ENCODE measurements at regions of chr11 and their contacts with region 1.

Region 1: GRCh38 chr11:75547580-75548058 is 14.4 kb upstream of the SERPINH1 start:
- H3K4me3 ChIP-seq: no peak overlapping the region
- H3K27ac ChIP-seq: no peak overlapping the region
- H3K4me1 ChIP-seq: no peaks in the 10 kb centered on the region
- CTCF ChIP-seq: peak; percentile 63

Region 2: DNA sequence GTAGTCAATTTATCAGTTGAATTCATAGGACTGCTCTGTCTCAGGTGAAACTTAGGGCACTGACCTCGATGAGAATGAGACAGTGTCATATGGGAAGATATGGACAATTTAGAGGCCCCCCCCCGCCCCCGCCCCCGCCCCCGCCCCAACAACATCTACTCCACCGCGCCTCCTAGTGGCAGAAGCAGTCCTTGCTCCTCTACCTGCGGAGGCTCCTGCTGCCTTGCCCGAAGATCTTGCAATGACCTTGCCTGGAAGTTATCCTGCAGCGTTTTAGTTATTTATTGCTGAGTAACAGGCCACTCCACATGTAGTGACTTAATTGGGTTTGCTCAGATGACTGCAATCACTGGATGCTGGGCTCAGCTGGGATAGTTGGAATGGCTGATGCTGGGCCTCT is 29.6 kb after region 1 on chr11:
- CTCF ChIA-PET with region 1: interaction called, 29 read pairs
- POLR2A ChIA-PET with region 1: interaction called, 4 read pairs
- H3K4me3 ChIP-seq: no peak overlapping the region
- H3K27ac ChIP-seq: no peak overlapping the region
- H3K4me1 ChIP-seq: no peaks in the 10 kb centered on the region
- CTCF ChIP-seq: no peak

Region 3: GRCh38 chr11:75768112-75768908 is 220.7 kb after region 1 on chr11 and contains the start of gene DGAT2:
- CTCF ChIA-PET with region 1: no interaction called
- POLR2A ChIA-PET with region 1: no interaction called
- H3K4me3 ChIP-seq: peak within 1 kb of the TSS; percentile 42
- H3K27ac ChIP-seq: peak within 1 kb of the TSS; percentile 48; the same call in 1 of the 2 replicates
- H3K4me1 ChIP-seq: no peaks in the 10 kb centered on the region
- CTCF ChIP-seq: peak; percentile 31; the same call in 1 of the 2 replicates

Region 4: DNA sequence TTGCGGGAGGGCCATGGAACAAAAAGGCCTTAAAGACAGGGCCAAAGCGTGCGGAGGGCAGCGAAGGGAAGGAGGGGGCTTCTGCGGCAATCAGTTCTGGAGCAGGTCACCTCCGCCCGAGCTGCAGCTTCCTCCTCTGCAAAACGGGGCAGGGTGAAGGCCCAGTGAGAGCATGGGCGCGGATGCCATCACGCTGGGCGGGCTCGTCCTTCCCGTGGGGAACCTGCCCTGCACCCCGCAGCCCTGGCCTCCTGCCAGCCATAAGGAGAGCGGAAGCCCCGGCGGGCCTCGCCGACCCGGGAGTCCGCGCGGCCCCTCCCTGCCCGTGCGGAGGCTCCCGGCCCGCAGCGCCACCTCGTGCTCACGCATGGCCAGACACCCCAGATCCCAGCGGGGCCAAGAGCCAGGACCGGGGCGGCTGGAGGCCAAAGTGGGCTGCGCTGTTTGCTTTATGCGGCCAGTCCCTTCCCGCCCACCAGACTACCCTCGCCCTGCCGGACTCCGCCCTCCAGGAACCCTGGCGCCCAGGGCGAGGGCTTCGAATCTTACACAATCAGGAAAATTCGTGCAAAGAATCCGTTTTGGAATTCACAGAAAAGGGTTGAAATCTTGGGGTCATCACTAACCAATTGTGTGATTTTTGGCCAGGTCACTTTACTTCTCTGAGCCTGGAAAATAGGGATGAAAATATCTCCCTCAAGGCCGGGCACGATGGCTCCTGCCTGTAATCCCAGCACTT is 1251.6 kb after region 1 on chr11:
- CTCF ChIA-PET with region 1: no interaction called
- POLR2A ChIA-PET with region 1: no interaction called
- H3K4me3 ChIP-seq: peak overlapping the region; percentile 5; the same call in 1 of the 2 replicates
- H3K27ac ChIP-seq: no peak overlapping the region
- H3K4me1 ChIP-seq: 0 out of 2 replicates have a peak, but pooled peaks cover 2% of the 10 kb centered on the region
- CTCF ChIP-seq: peak; percentile 73